Right cardiac atrium (tissue), 5 donors: ENCODE measurements at regions of chr17 and their contacts with region 1.

Region 1: DNA sequence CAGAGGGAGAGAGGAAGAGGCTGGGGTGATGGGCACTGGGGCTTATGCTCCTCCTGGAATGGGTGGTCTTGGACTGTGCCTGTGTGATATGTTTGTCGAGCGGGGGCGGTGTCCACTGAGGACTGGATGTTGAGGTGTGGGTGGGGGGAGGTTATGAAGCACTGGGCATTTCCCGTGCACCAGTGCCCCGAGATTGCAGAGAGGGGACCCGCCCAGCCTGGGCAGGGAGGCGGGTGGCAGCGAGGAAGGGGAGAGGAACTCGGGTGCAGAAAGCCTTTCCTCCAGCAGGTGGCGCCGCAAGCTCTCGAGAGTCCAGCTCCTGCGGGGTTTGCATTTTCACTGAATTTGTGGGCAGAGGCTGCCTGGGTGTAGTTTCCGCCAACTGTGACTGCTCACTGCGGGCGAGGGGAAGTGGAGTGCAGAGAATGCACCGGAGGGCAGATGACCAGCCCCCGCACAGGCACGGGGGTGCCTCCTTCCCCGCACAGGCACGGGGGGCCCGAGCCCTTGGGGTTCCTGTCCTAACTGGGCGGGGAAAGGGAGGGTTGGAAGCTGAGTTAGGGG is 190.6 kb downstream of the SEC14L1 start:
- DNase-seq: peak; percentile 92 to 97 (median 97)
- ATAC-seq: peak; percentile 88 to 91
- H3K4me3 ChIP-seq: no peak overlapping the region
- H3K27ac ChIP-seq: no peak overlapping the region
- H3K4me1 ChIP-seq: peaks cover 2% of the 10 kb centered on the region
- H3K27me3 ChIP-seq: no peaks in the 10 kb centered on the region

Region 2: DNA sequence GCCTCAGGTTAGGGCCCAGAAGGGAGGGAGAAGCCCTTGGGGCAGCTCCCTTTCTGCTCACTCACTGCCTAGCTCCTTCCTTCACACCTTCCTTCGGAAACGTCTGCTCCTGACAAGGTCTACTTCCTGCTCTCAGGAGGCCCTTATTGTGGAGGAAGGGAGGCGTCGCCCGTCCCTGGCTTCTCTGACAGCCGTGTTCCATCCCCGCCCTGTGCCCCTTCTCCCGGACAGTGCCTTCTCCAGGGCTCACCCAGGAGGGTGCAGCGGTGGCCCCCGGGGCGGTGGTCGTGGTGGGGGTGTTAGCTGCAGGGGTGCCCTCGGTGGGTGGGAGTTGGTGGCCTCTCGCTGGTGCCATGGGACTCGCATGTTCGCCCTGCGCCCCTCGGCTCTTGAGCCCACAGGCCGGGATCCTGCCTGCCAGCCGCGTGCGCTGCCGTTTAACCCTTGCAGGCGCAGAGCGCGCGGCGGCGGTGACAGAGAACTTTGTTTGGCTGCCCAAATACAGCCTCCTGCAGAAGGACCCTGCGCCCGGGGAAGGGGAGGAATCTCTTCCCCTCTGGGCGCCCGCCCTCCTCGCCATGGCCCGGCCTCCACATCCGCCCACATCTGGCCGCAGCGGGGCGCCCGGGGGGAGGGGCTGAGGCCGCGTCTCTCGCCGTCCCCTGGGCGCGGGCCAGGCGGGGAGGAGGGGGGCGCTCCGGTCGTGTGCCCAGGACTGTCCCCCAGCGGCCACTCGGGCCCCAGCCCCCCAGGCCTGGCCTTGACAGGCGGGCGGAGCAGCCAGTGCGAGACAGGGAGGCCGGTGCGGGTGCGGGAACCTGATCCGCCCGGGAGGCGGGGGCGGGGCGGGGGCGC is 41.3 kb after region 1 on chr17:
- intact Hi-C with region 1: loop called in 2 of 4 experiments (anchors 2 to 5 kb)
- DNase-seq: peak; percentile 87 to 97 (median 95)
- ATAC-seq: peak; percentile 70 to 79
- H3K4me3 ChIP-seq: peak overlapping the region; percentile 63
- H3K27ac ChIP-seq: peak overlapping the region; percentile 10
- H3K4me1 ChIP-seq: peaks cover 28% of the 10 kb centered on the region
- H3K27me3 ChIP-seq: no peaks in the 10 kb centered on the region

Region 3: DNA sequence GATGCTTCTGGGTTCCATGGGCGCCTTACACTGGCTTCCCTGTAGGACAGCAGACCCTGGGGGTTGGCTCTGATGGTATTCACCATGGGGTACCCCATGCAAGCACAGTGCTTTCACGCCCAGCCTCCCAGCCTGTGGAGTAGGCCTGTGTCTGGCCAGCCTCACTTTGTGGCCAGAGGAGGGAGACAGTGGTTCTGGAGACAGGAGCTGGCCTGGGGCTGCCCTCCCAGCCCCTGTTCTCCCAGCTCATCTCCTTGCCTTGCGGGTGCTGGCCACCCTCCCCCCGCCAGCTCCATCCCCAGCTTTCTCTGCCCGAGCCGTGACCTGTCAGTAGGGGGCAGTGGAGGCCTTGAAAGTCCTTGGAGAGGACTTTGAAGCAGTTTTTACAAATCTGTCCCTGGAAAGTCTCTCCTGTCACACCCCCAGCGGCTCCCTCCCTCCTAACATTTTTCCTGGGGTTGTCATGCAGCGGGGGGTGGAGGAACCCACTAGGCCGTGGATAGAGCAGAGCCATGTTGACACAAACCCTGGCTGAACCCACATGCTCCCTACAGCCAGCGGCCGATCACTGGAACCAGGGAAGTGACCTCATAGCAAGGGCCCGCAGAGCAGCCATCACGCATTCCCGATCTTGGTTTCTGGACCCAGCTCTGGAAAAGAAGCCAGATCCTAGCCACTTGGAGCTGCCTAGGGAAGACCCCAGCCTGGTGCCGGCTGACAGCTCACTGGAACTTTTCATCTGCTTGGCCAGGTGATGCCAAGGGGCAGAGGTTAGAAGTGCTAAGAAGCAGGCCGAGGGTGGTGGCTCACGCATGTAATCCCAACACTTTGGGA is 98.8 kb after region 1 on chr17:
- intact Hi-C with region 1: loop called (anchors 5 to 10 kb)
- DNase-seq: peak; percentile 94 to 96 (median 95)
- ATAC-seq: peak; percentile 88 to 92
- H3K4me3 ChIP-seq: no peak overlapping the region
- H3K27ac ChIP-seq: peak overlapping the region; percentile 79
- H3K4me1 ChIP-seq: peaks cover 45% of the 10 kb centered on the region
- H3K27me3 ChIP-seq: no peaks in the 10 kb centered on the region

Region 4: GRCh38 chr17:77494664-77495435 is 163.5 kb after region 1 on chr17:
- intact Hi-C with region 1: loop called (anchors 1 to 2 kb)
- DNase-seq: peak; percentile 70 to 92 (median 90)
- ATAC-seq: peak; percentile 46 to 62
- H3K4me3 ChIP-seq: no peak overlapping the region
- H3K27ac ChIP-seq: no peak overlapping the region
- H3K4me1 ChIP-seq: peaks cover 5% of the 10 kb centered on the region
- H3K27me3 ChIP-seq: no peaks in the 10 kb centered on the region